CD8-positive, alpha-beta T cell (primary cell): ENCODE measurements at regions of chr2 and their contacts with region 1.

Region 1: GRCh38 chr2:95022309-95023221 is 2.9 kb upstream of the MAL start:
- DNase-seq: peak; percentile 67 to 90 (median 81)
- ATAC-seq: peak; percentile 79
- H3K4me3 ChIP-seq: no peak overlapping the region
- H3K4me3 Mint-ChIP-seq: peak overlapping the region; percentile 85
- H3K27ac ChIP-seq: no peak overlapping the region
- H3K27ac Mint-ChIP-seq: peak overlapping the region; percentile 88
- H3K4me1 ChIP-seq: peaks cover 35% of the 10 kb centered on the region
- H3K4me1 Mint-ChIP-seq: peaks cover 41% of the 10 kb centered on the region
- H3K27me3 ChIP-seq: peaks cover 0 to 5% of the 10 kb centered on the region in 2 experiments
- H3K27me3 Mint-ChIP-seq: no peaks in the 10 kb centered on the region
- CTCF ChIP-seq: peak; percentile 66

Region 2: DNA sequence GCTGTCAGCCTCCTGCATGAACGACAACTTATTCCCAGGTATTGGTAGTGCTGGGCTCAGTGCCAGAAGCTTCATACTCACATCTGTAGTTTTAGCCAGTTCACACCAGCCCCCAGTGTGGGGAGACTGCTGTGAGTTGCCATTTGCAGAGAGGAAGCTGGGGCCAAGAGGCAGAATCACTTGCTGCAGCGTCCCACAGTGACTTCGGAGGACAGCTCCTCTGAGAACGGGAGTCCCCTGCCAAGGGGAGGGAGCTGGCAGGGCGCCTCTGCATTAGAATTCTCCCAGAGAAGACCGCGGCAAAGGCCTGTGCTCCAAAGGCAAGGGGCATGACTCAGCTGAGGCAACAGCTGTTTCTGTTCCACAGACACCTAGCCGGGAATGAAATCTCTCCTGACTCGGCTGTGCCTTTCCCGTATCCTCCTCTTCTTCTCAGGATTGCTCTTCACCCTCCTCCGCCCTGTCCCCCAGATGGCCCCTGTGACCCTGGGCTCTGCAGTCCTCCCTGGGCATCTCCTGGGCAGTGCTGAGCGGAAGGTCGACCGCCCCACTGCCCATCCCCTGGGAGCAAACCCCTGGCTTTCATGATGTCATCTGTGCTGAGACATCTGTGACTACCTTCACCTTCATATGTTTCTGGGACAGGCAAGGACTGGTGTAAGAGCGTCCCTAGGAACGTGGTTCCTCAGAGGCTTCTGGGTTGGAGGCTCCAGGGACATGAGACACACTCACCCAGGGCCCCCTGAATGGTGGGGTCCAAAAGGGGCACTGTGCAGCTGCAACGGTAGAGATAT is 20.9 kb after region 1 on chr2:
- CTCF ChIA-PET with region 1: interaction called, 15 read pairs
- POLR2A ChIA-PET with region 1: interaction called, 5 read pairs
- intact Hi-C with region 1: loop called in 1 of 2 experiments (anchors 2 kb)
- DNase-seq: peak in 1 of 9 experiments; percentile 35
- ATAC-seq: no peak
- H3K4me3 ChIP-seq: no peak overlapping the region
- H3K4me3 Mint-ChIP-seq: no peak overlapping the region
- H3K27ac ChIP-seq: no peak overlapping the region
- H3K27ac Mint-ChIP-seq: peak overlapping the region; percentile 82
- H3K4me1 ChIP-seq: peaks cover 75% of the 10 kb centered on the region
- H3K4me1 Mint-ChIP-seq: peaks cover 80% of the 10 kb centered on the region
- H3K27me3 ChIP-seq: no peaks in the 10 kb centered on the region
- H3K27me3 Mint-ChIP-seq: no peaks in the 10 kb centered on the region
- CTCF ChIP-seq: no peak

Region 3: DNA sequence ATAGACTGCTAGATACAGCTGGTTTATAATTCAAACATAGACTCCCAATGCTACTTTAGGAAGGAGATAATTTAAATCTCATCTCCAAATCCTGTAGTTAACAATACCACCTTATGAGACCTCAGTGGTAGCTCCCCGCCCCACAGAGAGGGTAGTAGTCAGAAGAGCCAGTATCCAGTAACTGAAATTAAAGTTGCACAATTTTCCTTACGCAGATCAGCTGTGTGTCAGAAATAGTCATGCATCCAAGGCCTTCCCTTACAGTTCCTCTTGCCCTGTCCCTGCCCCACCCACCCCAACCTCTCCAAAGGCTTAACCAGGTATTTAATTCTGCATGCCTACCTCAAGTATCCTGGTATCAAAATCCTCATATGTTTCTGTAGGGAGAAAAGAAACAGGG is 83.5 kb after region 1 on chr2:
- CTCF ChIA-PET with region 1: interaction called, 11 read pairs
- POLR2A ChIA-PET with region 1: interaction called, 3 read pairs
- intact Hi-C with region 1: no loop called
- DNase-seq: no peak
- ATAC-seq: no peak
- H3K4me3 ChIP-seq: no peak overlapping the region
- H3K4me3 Mint-ChIP-seq: no peak overlapping the region
- H3K27ac ChIP-seq: no peak overlapping the region
- H3K27ac Mint-ChIP-seq: no peak overlapping the region
- H3K4me1 ChIP-seq: no peaks in the 10 kb centered on the region
- H3K4me1 Mint-ChIP-seq: no peaks in the 10 kb centered on the region
- H3K27me3 ChIP-seq: no peaks in the 10 kb centered on the region
- H3K27me3 Mint-ChIP-seq: no peaks in the 10 kb centered on the region
- CTCF ChIP-seq: no peak

Region 4: GRCh38 chr2:95121407-95122196 is 99.0 kb after region 1 on chr2 and contains the start of gene MRPS5:
- CTCF ChIA-PET with region 1: interaction called, 142 read pairs
- POLR2A ChIA-PET with region 1: interaction called, 15 read pairs
- intact Hi-C with region 1: loop called in 1 of 2 experiments (anchors 1 kb)
- DNase-seq: peak; percentile 75 to 93 (median 85)
- ATAC-seq: peak; percentile 94
- H3K4me3 ChIP-seq: peak within 1 kb of the TSS; percentile 87 to 89
- H3K4me3 Mint-ChIP-seq: peak within 1 kb of the TSS; percentile 96
- H3K27ac ChIP-seq: peak within 1 kb of the TSS; percentile 81 to 85
- H3K27ac Mint-ChIP-seq: peak within 1 kb of the TSS; percentile 96
- H3K4me1 ChIP-seq: peaks cover 29% of the 10 kb centered on the region
- H3K4me1 Mint-ChIP-seq: peaks cover 44% of the 10 kb centered on the region
- H3K27me3 ChIP-seq: no peaks in the 10 kb centered on the region
- H3K27me3 Mint-ChIP-seq: no peaks in the 10 kb centered on the region
- CTCF ChIP-seq: no peak
- total RNA-seq, gene MRPS5: 20.0 to 21.3 TPM

Region 5: DNA sequence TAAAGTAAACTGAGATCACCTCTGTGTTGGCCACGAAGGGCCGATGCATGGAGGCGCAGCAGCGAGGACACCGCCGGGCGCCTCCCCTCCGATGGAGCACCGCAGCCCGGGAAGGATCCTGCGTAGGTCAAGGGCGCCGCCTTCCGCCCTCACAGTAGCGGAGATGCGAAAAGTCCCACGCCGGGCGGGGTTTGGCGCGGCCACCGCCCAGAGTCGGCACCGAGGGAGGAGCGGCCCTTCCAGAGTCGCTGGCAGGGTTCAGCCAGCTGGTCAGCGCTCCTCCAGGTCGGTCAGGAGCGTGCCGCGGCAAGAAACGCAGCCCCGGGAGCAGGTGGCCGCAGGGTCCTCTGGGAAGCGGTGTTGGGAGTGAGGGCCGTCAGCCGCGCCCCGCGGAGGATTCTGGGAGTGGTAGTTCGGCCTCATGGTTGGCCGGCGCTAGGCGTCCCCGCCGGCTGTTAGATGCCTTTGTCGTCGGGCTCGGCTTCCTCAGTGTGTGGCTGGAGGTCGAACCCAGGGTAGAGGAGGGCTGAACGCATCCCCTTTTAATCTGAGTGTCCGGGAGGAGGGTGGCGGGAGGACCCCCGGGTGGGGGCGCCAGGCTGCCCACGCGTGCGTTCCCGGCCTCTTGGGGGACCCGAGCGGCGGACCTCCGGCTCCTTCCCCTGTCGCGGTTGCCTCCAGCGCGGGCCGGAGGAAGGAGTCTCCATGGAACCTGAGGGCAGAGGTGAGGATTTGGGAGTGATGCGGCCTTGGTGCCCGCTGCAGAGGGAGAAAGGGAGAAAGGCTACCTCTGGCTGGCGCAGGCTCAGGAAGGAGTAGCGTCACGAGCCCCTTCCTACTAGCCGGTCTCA is 184.8 kb after region 1 on chr2 and contains the start of gene ZNF892:
- CTCF ChIA-PET with region 1: interaction called, 5 read pairs
- POLR2A ChIA-PET with region 1: no interaction called
- intact Hi-C with region 1: loop called (anchors 1 to 2 kb)
- DNase-seq: peak; percentile 53 to 89 (median 79)
- ATAC-seq: peak; percentile 90
- H3K4me3 ChIP-seq: peak within 1 kb of the TSS; percentile 74 to 97
- H3K4me3 Mint-ChIP-seq: peak within 1 kb of the TSS; percentile 94
- H3K27ac ChIP-seq: peak within 1 kb of the TSS; percentile 68 to 79
- H3K27ac Mint-ChIP-seq: peak within 1 kb of the TSS; percentile 91
- H3K4me1 ChIP-seq: peaks cover 7% of the 10 kb centered on the region
- H3K4me1 Mint-ChIP-seq: peaks cover 32% of the 10 kb centered on the region
- H3K27me3 ChIP-seq: no peaks in the 10 kb centered on the region
- H3K27me3 Mint-ChIP-seq: no peaks in the 10 kb centered on the region
- CTCF ChIP-seq: no peak
- total RNA-seq, gene ZNF892: 0.71 to 0.78 TPM

Region 6: DNA sequence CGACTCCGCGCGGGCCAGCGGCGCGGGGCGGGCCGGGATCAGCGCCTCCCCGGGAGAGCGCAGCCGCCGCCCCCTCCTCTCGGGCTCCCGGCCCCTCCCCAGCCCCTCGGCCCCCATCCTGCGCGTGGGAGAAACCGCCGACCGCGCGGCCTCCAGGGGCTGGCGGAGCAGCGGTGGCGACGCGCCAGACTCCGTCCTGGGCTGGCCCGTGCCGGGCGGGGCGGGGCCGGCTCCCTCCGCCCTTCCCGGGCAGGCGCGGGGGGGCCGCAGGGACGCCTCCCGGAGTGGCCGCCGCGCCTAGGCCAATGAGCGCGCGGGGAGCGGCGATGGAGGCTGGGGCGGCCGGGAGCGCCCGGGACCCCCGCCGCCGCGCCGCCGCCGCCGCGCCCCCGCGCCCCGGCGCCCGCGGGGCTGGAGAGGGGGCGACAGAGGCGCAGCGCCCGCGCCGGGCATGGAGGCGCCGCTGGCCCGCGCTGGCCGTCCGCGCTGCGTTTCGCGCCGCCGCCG is 323.7 kb after region 1 on chr2:
- CTCF ChIA-PET with region 1: no interaction called
- POLR2A ChIA-PET with region 1: no interaction called
- intact Hi-C with region 1: no loop called
- DNase-seq: no peak
- ATAC-seq: no peak
- H3K4me3 ChIP-seq: peak overlapping the region in 1 of 2 experiments; percentile 49
- H3K4me3 Mint-ChIP-seq: no peak overlapping the region
- H3K27ac ChIP-seq: no peak overlapping the region
- H3K27ac Mint-ChIP-seq: no peak overlapping the region
- H3K4me1 ChIP-seq: peaks cover 6% of the 10 kb centered on the region
- H3K4me1 Mint-ChIP-seq: peaks cover 8% of the 10 kb centered on the region
- H3K27me3 ChIP-seq: peaks cover 5 to 13% of the 10 kb centered on the region in 2 experiments
- H3K27me3 Mint-ChIP-seq: peaks cover 45% of the 10 kb centered on the region
- CTCF ChIP-seq: no peak